ENCODE measurements at regions of chr9 and their contacts with region 1.

Region 1: GRCh38 chr9:100598641-100599145 is 20.8 kb downstream of the CAVIN4 start:
- DNase-seq: peak; percentile 60 to 94
- H3K4me3 ChIP-seq: peak overlapping the region; percentile 18
- CTCF ChIP-seq: no peak
- POLR2A ChIP-seq: no peak

Region 2: GRCh38 chr9:99748266-99748665 is 850.4 kb before region 1 on chr9:
- intact Hi-C with region 1: no loop called
- DNase-seq: no peak
- H3K4me3 ChIP-seq: no peak overlapping the region
- CTCF ChIP-seq: no peak
- POLR2A ChIP-seq: no peak

Region 3: DNA sequence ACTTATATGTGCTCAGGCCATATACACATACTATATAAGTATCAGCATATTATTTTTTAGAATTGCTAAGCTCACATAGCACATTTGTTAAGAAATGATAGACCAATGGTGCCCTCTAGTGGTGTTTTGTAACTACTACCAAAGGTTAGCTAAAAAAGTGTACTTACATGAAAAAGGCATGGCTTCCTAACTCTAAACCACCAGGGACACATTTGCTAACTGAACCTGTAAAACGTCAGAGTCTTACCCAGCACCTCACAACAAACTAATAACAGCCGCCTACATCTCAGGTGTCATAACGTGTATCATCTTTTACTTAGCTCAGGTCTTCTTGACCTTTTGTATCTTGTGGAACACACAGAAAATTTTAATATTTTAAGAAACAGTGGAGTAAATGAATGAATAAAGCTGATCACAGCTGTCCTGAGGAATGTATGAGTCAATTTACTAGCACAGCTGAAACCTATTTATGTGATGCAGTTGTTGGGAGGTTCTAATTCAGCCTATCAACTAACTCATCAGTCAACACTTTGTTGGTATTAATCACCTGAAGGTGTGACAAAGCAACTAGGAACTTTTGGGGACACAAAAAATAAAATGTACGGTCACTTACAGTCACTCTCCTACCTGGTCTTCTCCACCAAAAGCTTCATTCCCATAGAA is 713.2 kb after region 1 on chr9:
- intact Hi-C with region 1: loop called (anchors 10 kb)
- DNase-seq: no peak
- H3K4me3 ChIP-seq: no peak overlapping the region
- CTCF ChIP-seq: no peak
- POLR2A ChIP-seq: no peak

Region 4: GRCh38 chr9:101601904-101602765 is 1003.4 kb after region 1 on chr9:
- intact Hi-C with region 1: loop called (anchors 10 kb)
- DNase-seq: no peak
- H3K4me3 ChIP-seq: no peak overlapping the region
- CTCF ChIP-seq: no peak
- POLR2A ChIP-seq: no peak

Measured in lower leg skin (tissue), 4 donors.